ENCODE measurements at regions of chr3 and their contacts with region 1.

Region 1: GRCh38 chr3:195907934-195908693 is at the start of gene TNK2:
- DNase-seq: peak; percentile 56
- ATAC-seq: peak; percentile 14
- H3K4me3 ChIP-seq: peak within 1 kb of the TSS; percentile 74
- H3K27ac ChIP-seq: no peak within 1 kb of the TSS
- H3K4me1 ChIP-seq: peaks cover 55% of the 10 kb centered on the region
- H3K27me3 ChIP-seq: no peaks in the 10 kb centered on the region
- CTCF ChIP-seq: no peak
- total RNA-seq, gene TNK2: 43.7 and 49.3 TPM in 2 replicates

Region 2: DNA sequence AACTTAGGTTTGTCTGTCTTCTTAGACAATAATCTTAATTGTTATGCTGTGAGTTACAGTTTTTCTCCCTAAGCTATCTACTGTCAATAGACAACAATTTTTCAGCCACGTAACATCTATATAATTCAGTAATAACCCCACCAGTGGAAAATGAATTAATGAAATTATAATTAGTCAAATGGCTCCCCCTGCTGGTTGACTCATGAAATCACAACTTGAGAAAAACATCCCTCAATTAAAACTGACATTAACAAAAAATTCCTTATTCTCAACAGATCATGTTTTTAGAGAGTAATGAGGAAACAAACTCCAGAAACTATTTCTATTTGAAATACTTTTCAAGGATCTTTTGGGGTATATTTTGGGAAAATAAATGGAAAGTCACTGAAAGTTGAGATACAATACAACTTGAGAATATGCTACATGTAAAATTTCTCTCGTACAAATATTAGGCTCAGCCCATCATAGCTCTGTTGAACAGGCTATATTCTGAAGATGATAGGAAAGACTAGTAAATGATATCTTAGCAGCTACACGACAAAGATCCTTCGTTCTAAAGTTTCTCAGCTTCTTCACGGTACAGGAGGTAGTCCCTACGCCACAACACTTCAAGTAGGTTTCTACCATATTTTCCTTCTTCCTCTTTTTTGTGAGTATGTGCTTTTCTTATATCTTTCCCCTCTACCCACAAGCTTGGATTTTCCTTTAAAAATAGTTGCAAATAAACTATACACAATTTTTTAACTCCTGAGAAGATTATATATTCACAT is 385.7 kb before region 1 on chr3:
- CTCF ChIA-PET with region 1: interaction called, 12 read pairs
- POLR2A ChIA-PET with region 1: no interaction called
- intact Hi-C with region 1: no loop called
- DNase-seq: peak; percentile 57
- ATAC-seq: no peak
- H3K4me3 ChIP-seq: no peak overlapping the region
- H3K27ac ChIP-seq: no peak overlapping the region
- H3K4me1 ChIP-seq: peaks cover 23% of the 10 kb centered on the region
- H3K27me3 ChIP-seq: no peaks in the 10 kb centered on the region
- CTCF ChIP-seq: peak; percentile 91